GM10248 (cell line): ENCODE measurements at regions of chr7 and their contacts with region 1.

Region 1: DNA sequence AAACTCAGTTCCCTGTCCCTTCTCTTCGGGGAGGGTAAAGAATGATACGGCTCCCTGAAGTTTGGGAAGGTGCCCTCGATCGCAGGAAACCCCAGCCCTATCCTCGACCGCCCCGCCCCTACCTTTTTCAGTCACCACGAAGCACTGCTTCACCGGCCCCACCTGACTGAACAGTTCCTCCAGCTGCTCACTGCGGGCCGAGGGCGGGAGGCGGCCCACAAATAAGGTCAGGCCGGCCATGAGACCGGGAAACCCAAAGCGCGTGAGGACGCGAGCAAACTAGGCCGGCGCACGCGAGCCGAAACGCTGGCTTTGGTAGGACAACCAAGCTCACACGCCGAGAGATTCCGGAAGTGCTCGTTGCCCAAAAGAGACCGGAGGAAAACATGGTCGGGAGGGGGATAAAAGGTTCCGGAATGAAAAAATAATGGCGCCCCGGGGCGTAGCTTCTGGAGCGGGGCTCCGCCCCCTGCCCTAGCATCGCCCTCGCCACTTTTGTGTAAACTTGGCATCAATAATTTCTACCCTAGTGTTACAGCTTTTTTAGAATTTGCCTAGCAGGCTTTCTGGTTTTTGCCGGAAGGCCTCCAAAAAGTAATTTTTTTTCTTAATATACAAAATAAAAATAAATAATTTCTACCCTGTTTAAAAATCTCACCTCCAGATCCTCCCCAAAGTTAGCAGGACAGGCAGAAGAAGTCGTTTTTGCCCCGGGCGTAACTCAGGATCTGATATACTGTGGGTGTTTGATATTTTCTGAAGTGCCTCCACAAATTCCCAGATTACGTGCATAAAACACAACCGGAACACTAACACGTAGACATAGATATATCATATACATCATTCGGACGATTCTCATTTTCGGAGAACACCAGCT is at the start of gene RBM28:
- DNase-seq: peak; percentile 93
- CTCF ChIP-seq: no peak

Region 2: GRCh38 chr7:128311013-128311412 is 32.8 kb before region 1 on chr7:
- CTCF ChIA-PET with region 1: no interaction called
- POLR2A ChIA-PET with region 1: no interaction called
- DNase-seq: no peak
- CTCF ChIP-seq: no peak

Region 3: GRCh38 chr7:128356546-128357216 is 12.9 kb after region 1 on chr7:
- CTCF ChIA-PET with region 1: interaction called, 35 read pairs
- POLR2A ChIA-PET with region 1: interaction called, 3 read pairs
- DNase-seq: no peak
- CTCF ChIP-seq: no peak

Region 4: DNA sequence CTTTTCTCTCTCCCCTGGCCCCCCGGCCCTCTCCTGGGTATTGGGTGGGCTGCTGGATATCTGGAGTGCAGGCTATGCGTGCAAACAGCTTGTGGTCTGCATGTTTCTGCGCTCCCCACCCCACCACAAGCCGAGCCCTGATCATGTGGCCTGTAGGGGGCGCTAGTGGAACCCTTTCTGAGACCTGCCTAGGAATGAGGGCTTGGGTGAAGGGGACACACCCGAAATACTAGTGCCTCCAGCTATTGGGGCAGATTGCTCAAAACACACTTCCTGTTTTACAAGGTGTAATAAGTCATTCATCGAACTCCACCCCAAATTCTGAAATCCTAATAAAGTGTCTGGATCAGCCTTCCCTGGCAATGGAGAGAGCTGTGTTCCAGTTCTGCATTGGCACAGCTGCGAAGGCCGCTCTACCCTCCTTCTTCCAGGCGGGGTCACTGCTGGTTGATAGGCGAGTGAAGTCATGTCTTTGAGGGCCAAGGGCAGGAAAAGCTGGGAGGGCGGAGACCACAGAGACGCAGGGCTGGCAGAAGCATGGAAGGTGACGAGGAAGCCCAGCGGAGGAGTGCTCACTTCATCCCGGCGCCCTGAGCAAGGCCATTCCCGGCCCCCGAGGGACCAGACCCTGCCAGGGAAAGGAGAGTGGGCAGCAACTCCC is 37.5 kb after region 1 on chr7:
- CTCF ChIA-PET with region 1: interaction called, 168 read pairs
- POLR2A ChIA-PET with region 1: interaction called, 3 read pairs
- DNase-seq: no peak
- CTCF ChIP-seq: peak; percentile 53

Region 5: DNA sequence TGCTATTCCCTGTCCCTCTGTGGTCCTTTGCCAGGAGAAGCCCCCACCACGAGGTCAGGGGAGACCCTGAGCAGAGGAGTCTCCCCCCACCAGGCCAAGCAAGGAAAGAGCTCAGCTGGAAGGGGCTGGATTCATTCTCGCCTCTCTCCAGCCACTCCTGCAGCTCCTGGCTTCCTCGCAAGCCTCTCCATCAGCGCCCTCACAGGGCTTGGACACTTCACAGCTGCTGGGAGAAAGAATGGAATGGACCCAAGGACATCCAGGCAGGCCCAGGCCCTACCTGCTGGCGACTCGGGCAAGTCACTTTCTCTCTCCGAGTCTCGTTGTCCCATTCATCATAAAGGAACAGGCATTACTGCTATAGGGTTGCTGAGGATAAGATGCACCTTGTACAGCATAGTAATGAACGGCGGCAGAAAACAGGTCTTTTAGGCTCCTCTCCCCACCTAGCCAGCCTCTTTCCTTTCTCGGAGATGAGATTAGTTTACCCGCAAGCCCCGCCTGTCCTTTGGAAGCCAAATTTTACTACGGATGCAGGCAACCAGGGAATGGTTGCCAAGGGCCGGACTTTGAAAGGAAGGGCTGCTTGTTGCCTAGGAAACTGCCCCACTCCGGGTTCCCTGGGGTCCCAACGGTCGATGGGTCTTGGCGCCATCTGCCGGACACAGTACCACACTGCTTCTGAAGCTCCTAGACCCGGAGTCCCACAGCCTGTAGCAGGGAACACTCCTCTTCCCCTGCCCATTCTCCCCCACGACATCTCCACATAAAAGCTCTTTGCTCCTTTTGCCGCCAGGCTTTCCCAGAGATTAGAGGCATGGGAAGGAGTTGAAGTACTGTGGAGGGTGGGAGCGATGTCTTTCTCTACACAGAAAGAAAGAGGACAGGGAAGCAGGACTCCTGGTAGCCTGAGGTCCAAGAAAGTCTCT is 43.7 kb after region 1 on chr7:
- CTCF ChIA-PET with region 1: interaction called, 168 read pairs
- POLR2A ChIA-PET with region 1: interaction called, 3 read pairs
- DNase-seq: peak; percentile 89
- CTCF ChIP-seq: peak; percentile 89

Region 6: DNA sequence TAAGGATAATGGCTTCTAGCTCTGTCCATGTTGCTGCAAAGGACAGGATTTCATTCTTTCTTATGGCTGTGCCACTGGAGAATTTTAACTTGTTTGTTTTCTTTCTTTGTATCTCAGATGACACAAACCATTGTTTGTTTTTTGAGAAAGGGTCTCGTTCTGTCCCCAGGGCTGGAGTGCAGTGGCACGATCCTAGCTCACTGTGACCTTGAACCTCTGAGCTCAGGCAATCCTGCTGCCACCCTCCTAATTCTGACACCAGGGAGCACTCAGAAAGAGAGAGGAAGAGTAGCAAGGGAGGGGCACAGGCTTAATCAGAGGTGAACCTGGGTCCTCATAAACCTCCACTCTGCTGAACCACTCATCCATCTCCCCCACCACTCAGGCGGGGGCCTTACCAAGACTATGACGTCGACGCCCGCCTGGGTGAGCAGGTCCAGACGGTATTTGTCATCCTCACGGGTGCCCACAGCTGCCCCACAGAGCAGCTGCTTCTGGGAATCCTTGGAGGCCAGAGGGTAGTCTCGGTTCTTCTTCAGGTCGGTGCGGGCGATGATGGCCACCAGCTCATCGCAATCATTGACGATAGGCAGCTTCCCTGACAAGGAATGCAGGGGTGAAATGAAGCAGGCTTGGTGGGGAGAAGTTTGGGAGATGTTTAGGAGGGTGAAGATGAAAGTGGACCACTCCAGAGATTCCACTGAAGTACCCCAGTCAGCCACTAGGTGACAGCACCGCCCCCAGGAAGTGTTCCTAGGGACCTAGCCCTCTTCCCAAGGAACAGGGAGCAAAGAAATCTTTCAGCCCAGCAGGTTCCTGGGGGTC is 54.4 kb after region 1 on chr7:
- CTCF ChIA-PET with region 1: interaction called, 168 read pairs
- POLR2A ChIA-PET with region 1: no interaction called
- DNase-seq: peak; percentile 58
- CTCF ChIP-seq: peak; percentile 70

Region 7: GRCh38 chr7:128425850-128426249 is 82.1 kb after region 1 on chr7:
- CTCF ChIA-PET with region 1: interaction called, 51 read pairs
- POLR2A ChIA-PET with region 1: no interaction called
- DNase-seq: peak; percentile 77
- CTCF ChIP-seq: peak; percentile 91